HEK293 (cell line): ENCODE measurements at regions of chr10 and their contacts with region 1.

Region 1: DNA sequence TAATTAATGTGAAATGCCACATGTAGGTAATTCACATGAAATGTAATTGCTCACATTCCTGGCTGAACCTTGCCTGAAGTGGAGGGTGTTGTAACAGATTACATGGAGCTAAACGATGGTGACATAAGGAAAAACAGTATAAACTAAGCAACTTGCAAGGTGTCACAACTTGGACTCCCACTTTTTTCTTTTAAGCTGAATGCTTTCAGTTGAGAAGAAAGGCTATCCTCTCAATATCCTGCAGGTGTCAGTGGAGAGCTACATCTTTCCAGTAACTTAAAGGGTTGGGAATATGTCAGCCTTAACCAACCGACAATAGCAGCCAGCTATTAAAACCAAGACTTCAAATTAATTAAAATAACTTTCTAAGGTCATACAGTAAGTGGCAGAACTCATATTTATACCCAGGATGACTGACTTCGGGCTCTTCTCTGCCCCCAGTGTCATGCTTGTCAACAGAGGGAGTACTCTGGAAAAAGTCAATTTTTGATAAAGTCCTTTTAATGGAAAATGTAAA is 33.7 kb downstream of the NRBF2 start:
- H3K4me3 ChIP-seq: no peak overlapping the region
- H3K27ac ChIP-seq: no peak overlapping the region
- H3K4me1 ChIP-seq: peaks cover 8% of the 10 kb centered on the region
- CTCF ChIP-seq: no peak; the same call in 1 of the 2 replicates

Region 2: DNA sequence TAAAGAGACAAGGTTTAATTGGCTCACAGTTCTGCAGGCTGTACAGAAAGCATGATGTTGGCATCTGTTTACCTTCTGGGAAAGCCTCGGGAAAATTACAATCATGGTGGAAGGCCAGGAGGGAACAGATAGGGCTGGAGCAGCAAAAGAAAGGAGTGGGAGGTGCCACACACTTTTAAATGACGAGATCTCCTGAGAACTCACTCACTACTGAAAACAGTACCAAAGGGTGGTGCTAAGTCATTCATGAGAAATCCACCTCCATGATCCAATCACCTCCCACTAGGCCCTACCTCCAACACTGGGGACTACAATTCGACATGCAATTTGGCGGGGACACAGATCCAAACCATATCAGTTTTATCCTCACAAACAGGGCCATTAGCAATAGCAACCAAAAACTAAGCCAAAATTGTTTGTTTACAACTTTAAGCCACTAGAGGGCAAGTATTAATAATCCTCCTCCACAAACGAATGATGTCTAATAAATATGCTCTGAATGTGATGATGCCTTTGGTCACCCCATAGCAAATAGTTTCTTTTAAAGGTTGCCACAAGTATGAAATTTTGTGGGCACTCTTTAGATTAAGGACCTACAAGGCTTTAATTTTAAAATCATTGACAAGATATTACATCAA is 162.9 kb before region 1 on chr10:
- CTCF ChIA-PET with region 1: no interaction called
- POLR2A ChIA-PET with region 1: no interaction called
- H3K4me3 ChIP-seq: no peak overlapping the region
- H3K27ac ChIP-seq: no peak overlapping the region
- H3K4me1 ChIP-seq: no peaks in the 10 kb centered on the region
- CTCF ChIP-seq: no peak

Region 3: GRCh38 chr10:63197344-63198106 is 30.7 kb after region 1 on chr10:
- CTCF ChIA-PET with region 1: interaction called, 10 read pairs
- POLR2A ChIA-PET with region 1: no interaction called
- H3K4me3 ChIP-seq: no peak overlapping the region
- H3K27ac ChIP-seq: no peak overlapping the region
- H3K4me1 ChIP-seq: peaks cover 2% of the 10 kb centered on the region; the same call in 1 of the 2 replicates
- CTCF ChIP-seq: no peak

Region 4: GRCh38 chr10:63337455-63338251 is 170.9 kb after region 1 on chr10:
- CTCF ChIA-PET with region 1: no interaction called
- POLR2A ChIA-PET with region 1: no interaction called
- H3K4me3 ChIP-seq: no peak overlapping the region
- H3K27ac ChIP-seq: no peak overlapping the region
- H3K4me1 ChIP-seq: no peaks in the 10 kb centered on the region
- CTCF ChIP-seq: no peak

Region 5: GRCh38 chr10:63645195-63645594 is 478.4 kb after region 1 on chr10:
- CTCF ChIA-PET with region 1: interaction called, 11 read pairs
- POLR2A ChIA-PET with region 1: no interaction called
- H3K4me3 ChIP-seq: no peak overlapping the region
- H3K27ac ChIP-seq: no peak overlapping the region
- H3K4me1 ChIP-seq: no peaks in the 10 kb centered on the region
- CTCF ChIP-seq: no peak

Region 6: DNA sequence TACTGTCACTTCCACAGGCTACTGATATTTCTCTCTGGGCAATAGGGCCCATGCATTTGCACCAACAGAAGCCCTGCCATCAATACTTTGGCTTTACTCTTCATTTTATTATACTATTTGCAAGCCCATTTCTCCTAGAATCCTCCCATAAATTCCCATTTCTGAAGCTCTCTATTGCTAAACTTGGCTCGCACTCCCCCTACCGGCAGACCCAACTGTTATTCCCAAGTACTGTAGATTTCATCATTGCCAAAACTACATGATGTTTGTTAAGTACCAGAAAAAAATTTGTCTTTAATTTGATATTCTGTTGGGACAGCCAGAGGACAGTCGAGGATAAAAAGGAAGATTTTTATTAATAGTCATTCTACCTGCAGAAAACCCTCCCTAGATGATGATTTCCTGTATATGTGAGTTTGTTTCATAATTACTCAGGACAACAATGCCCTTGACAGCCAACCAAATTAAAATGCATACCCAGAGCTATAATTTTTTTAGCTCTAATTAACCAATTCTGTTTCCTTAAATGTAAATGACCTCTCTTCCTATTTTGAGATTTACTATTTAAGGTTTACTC is 653.0 kb after region 1 on chr10:
- CTCF ChIA-PET with region 1: interaction called, 10 read pairs
- POLR2A ChIA-PET with region 1: no interaction called
- H3K4me3 ChIP-seq: no peak overlapping the region
- H3K27ac ChIP-seq: no peak overlapping the region
- H3K4me1 ChIP-seq: no peaks in the 10 kb centered on the region
- CTCF ChIP-seq: no peak